Common myeloid progenitor, CD34-positive (primary cell): ENCODE measurements at regions of chr12 and their contacts with region 1.

Region 1: GRCh38 chr12:54207484-54208294 is 18.9 kb upstream of the SMUG1 start:
- DNase-seq: peak; percentile 54 to 71 (median 58)
- H3K4me3 ChIP-seq: no peak overlapping the region
- H3K27ac ChIP-seq: no peak overlapping the region
- H3K4me1 ChIP-seq: peaks cover 0 to 2% (median 0%) of the 10 kb centered on the region in 4 experiments
- H3K27me3 ChIP-seq: peaks cover 3 to 52% (median 32%) of the 10 kb centered on the region in 5 experiments

Region 2: DNA sequence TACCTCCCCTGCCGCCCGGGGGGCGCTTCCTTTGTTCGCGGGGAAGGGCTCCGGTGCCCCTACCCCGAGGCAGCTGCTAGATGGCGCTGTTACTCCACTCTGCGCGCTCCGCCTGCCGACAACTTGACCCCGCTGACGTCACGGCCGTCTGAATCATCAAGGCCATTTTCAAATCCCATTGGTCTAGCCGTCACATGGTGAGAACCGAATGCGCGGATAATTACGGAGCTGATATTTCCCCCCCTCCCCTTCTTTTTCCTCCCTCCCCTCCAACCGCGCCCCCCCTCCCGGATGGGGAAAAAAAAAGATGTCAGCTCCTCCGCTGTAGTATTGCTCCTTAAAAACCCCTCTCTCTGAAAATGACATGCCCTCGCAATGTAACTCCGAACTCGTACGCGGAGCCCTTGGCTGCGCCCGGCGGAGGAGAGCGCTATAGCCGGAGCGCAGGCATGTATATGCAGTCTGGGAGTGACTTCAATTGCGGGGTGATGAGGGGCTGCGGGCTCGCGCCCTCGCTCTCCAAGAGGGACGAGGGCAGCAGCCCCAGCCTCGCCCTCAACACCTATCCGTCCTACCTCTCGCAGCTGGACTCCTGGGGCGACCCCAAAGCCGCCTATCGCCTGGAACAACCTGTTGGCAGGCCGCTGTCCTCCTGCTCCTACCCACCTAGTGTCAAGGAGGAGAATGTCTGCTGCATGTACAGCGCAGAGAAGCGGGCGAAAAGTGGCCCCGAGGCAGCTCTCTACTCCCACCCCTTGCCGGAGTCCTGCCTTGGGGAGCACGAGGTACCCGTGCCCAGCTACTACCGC is 222.6 kb before region 1 on chr12 and contains the start of gene HOXC10:
- CTCF ChIA-PET with region 1: interaction called, 10 read pairs
- POLR2A ChIA-PET with region 1: no interaction called
- DNase-seq: peak; percentile 89 to 90 (median 90)
- H3K4me3 ChIP-seq: peak within 1 kb of the TSS in 1 of 7 experiments; percentile 32
- H3K27ac ChIP-seq: no peak within 1 kb of the TSS
- H3K4me1 ChIP-seq: peaks cover 0 to 25% (median 19%) of the 10 kb centered on the region in 4 experiments
- H3K27me3 ChIP-seq: peaks cover 39 to 99% (median 74%) of the 10 kb centered on the region in 5 experiments

Region 3: DNA sequence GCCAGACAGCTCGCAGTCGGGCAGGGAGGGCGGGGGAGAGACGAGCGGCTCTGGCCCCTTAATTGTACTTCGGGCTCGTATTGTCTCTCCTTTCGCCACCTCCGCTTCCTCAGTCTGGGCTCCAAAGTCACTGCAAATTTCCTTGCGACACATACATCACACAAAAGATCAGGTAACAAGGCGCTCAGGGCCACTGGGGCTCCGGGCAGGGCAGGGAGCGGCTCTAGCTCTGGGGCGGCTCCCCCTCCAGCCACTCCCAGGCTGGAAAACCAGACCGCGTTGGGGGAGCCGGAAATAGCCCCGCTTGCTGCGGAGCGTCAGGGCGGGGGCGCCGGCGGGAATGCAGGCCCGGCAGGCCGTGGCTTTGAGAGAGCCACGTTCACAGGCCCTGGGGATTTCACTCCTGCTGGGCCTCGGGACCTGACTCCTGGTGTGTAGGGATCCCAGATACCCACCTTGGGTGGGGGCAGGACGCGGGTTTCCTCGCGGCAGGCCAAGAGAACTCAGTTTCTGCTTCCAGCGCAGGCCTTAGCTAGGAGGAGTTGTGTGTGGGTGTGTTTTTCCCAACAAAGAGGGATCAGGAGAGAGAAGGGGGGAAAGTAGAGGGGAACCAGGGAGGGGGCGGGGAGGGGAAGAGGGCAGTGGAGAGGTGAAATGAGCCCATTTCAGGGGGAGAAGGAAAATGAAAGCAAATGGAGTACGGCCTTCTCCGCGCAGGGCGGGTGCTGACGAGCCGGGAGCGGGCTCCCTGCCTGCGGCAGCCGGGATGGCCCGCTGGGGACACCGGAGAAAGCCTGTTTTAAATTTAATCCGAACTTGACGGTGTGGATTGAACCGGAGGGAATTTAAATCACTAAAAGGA is 212.1 kb before region 1 on chr12:
- CTCF ChIA-PET with region 1: interaction called, 23 read pairs
- POLR2A ChIA-PET with region 1: no interaction called
- DNase-seq: peak in 2 of 3 donors; percentile 45 to 48
- H3K4me3 ChIP-seq: peak overlapping the region in 6 of 7 experiments; percentile 16 to 72 (median 36)
- H3K27ac ChIP-seq: peak overlapping the region in 1 of 2 experiments; percentile 70
- H3K4me1 ChIP-seq: peaks cover 0 to 29% (median 16%) of the 10 kb centered on the region in 4 experiments
- H3K27me3 ChIP-seq: peaks cover 10 to 100% (median 66%) of the 10 kb centered on the region in 5 experiments

Region 4: DNA sequence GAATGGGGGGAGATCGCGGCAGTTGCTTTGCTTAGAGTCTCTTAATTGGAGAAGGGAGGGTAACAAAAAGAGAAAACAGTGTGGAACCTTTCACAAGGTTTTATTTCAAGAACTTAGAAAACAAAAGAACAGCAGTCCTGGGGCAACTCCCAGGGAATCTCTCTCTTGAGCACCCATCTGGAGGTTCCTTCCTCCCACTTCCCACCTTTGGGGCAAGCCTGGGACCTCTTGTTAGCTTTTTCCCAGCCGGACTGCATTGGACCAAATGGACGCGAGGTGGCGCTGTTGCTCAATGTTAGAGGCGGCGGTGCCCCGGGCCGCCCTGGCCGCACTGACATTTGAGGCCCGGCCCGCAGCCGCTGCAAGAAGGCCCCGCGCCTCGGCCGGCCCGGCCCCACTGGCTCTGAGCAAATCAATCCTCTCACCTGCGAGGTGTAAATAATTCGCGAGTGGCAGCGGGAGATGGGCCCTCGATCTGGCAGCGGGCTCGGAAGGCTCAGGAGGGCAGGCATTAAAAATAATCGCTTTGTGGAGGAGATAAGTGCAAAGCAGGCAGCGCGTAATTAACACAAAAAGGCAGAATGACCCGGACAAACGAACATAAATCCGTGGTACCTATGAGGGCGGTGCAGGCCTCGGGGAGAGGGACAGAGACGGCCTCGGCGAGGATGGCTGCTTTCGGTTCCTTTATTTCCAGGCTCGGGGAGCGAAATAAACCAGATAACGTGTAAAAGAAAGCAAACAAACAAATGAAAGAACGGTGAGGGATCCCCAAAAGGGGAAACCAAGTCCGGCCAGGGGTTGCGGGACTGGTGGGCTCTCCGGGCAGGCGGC is 201.6 kb before region 1 on chr12:
- CTCF ChIA-PET with region 1: interaction called, 101 read pairs
- POLR2A ChIA-PET with region 1: interaction called, 3 read pairs
- DNase-seq: peak; percentile 73 to 80 (median 79)
- H3K4me3 ChIP-seq: peak overlapping the region in 4 of 7 experiments; percentile 32 to 72 (median 60)
- H3K27ac ChIP-seq: no peak overlapping the region
- H3K4me1 ChIP-seq: peaks cover 0 to 13% (median 8%) of the 10 kb centered on the region in 4 experiments
- H3K27me3 ChIP-seq: peaks cover 16 to 98% (median 67%) of the 10 kb centered on the region in 5 experiments

Region 5: DNA sequence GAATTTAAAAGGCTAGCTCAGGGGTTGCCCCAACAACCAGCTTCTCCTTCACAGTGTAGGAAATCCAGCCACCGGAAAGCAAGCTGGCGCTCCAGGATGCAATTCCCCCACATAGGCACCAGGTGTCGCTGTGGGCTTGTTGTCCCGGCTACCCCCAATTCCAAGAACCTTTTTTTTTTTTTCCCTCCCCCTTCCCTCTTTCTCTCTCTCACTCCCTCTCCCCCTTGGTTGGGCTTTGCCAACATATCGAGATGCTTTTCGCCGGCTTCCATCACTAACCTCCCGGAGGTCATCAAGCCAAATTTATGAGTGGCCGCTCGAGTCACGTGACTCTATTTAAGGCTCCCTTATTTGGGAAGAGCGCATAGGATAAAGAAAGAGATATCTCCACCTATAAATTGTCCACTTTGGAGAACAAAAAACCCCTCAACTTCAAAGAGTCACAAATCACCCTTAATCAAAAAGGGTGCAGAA is 175.0 kb before region 1 on chr12 and contains the start of gene HOXC5:
- CTCF ChIA-PET with region 1: interaction called, 51 read pairs
- POLR2A ChIA-PET with region 1: no interaction called
- DNase-seq: peak; percentile 68 to 84 (median 80)
- H3K4me3 ChIP-seq: peak within 1 kb of the TSS in 2 of 7 experiments; percentile 8 to 17
- H3K27ac ChIP-seq: no peak within 1 kb of the TSS
- H3K4me1 ChIP-seq: peaks cover 0 to 27% (median 12%) of the 10 kb centered on the region in 4 experiments
- H3K27me3 ChIP-seq: peaks cover 15 to 100% (median 71%) of the 10 kb centered on the region in 5 experiments

Region 6: GRCh38 chr12:54053751-54054741 is 153.6 kb before region 1 on chr12 and contains the start of gene HOXC4:
- CTCF ChIA-PET with region 1: interaction called, 11 read pairs
- POLR2A ChIA-PET with region 1: no interaction called
- DNase-seq: peak in 2 of 3 donors; percentile 34 to 69
- H3K4me3 ChIP-seq: peak within 1 kb of the TSS in 6 of 7 experiments; percentile 20 to 67 (median 54)
- H3K27ac ChIP-seq: no peak within 1 kb of the TSS
- H3K4me1 ChIP-seq: peaks cover 0 to 19% (median 9%) of the 10 kb centered on the region in 4 experiments
- H3K27me3 ChIP-seq: peaks cover 12 to 99% (median 73%) of the 10 kb centered on the region in 5 experiments

Region 7: GRCh38 chr12:54191550-54192022 is 16.1 kb before region 1 on chr12:
- CTCF ChIA-PET with region 1: interaction called, 123 read pairs
- POLR2A ChIA-PET with region 1: no interaction called
- DNase-seq: peak; percentile 86 to 93 (median 86)
- H3K4me3 ChIP-seq: no peak overlapping the region
- H3K27ac ChIP-seq: no peak overlapping the region
- H3K4me1 ChIP-seq: peaks cover 4 to 17% (median 13%) of the 10 kb centered on the region in 4 experiments
- H3K27me3 ChIP-seq: peaks cover 14 to 67% (median 35%) of the 10 kb centered on the region in 5 experiments

Region 8: DNA sequence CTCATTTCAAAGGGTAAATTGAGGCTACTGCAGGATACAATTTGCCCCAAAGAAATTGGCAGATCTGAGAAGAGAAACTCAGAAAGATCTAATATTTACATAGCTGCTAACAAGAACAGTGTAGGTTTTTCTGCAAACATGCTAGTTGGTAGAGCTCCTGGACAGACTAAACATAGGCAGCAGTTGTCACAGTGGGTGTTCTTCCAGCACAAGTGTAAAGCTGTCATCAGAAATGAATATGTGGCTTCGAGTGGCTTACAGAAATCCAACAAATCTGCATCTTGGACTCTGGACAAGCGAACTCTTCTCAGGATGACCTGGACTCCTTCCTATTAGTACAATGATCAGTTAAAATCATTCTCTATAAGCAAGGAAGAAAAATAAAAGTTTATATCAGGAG is 66.3 kb after region 1 on chr12:
- CTCF ChIA-PET with region 1: no interaction called
- POLR2A ChIA-PET with region 1: no interaction called
- DNase-seq: no peak
- H3K4me3 ChIP-seq: no peak overlapping the region
- H3K27ac ChIP-seq: no peak overlapping the region
- H3K4me1 ChIP-seq: peaks cover 12 to 26% (median 21%) of the 10 kb centered on the region in 4 experiments
- H3K27me3 ChIP-seq: no peaks in the 10 kb centered on the region